Panc1 (cell line): ENCODE measurements at regions of chr12 and their contacts with region 1.

Region 1: GRCh38 chr12:29309320-29309902 is 71.6 kb downstream of the ERGIC2 start:
- DNase-seq: no peak
- ATAC-seq: no peak
- H3K4me3 ChIP-seq: no peak overlapping the region
- H3K27ac ChIP-seq: no peak overlapping the region
- H3K4me1 ChIP-seq: no peaks in the 10 kb centered on the region
- H3K27me3 ChIP-seq: no peaks in the 10 kb centered on the region
- CTCF ChIP-seq: peak; percentile 57

Region 2: DNA sequence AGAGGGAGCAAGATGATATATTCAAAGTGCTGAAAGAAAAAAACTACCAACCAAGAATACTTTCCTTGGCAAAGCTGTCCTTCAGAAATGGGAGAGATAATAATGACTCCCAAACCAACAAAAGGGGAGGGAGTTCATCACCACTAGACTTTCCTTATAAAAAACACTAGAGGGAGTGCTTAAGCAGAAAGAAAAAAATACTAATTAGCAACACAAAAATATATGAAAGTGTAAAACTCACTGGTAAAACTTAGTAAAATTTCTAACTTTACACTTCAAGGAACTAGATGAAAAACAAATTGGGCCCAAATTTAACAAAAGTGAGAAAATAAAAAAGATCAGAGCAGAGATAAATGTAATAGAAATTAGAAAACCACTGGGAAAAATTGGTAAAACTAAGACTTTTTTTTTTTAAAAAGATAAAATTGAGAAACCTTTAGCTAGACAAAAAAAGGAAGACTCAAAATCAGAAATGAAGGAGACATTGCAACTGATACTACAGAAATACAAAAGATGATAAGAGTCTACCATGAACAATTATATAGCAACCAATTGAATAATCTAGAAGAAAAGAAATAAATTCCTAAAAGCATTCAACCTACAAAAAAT is 220.7 kb before region 1 on chr12:
- CTCF ChIA-PET with region 1: no interaction called
- POLR2A ChIA-PET with region 1: no interaction called
- in situ Hi-C with region 1: no loop called
- intact Hi-C with region 1: no loop called
- DNase-seq: no peak
- ATAC-seq: no peak
- H3K4me3 ChIP-seq: no peak overlapping the region
- H3K27ac ChIP-seq: no peak overlapping the region
- H3K4me1 ChIP-seq: no peaks in the 10 kb centered on the region
- H3K27me3 ChIP-seq: no peaks in the 10 kb centered on the region
- CTCF ChIP-seq: peak; percentile 60; the same call in 1 of the 2 replicates

Region 3: GRCh38 chr12:29131539-29131938 is 177.9 kb before region 1 on chr12:
- CTCF ChIA-PET with region 1: no interaction called
- POLR2A ChIA-PET with region 1: no interaction called
- in situ Hi-C with region 1: no loop called
- intact Hi-C with region 1: no loop called
- DNase-seq: no peak
- ATAC-seq: no peak
- H3K4me3 ChIP-seq: no peak overlapping the region
- H3K27ac ChIP-seq: no peak overlapping the region
- H3K4me1 ChIP-seq: no peaks in the 10 kb centered on the region
- H3K27me3 ChIP-seq: no peaks in the 10 kb centered on the region
- CTCF ChIP-seq: no peak

Region 4: DNA sequence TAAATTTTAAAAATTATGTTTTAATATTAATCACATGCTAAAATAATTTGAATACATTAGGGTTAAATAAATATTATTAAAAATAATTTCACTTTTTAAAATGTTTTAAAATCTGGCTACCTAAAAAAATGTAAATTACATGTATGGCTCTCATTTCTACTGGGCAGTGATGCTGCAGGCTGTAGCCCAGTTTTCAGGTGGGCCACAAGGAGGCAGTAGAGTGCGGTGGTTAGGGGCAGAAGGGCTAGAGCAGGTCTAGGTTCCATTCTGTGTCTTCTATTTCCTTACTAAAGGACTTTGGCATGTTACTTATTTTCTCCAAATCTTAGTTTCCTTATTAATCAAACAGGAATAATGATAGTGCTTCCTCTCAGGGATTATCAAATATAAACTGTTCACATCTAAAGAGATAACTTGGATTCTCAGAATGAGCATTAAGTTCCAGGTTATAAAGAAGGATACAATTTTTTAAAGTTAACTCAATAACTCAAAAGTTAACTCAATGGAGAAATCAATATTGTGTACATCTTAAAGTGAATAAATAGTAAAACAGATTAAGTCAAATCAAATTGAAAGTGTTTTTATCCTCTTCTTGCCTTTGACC is 243.0 kb after region 1 on chr12:
- CTCF ChIA-PET with region 1: interaction called, 10 read pairs
- POLR2A ChIA-PET with region 1: no interaction called
- in situ Hi-C with region 1: no loop called
- intact Hi-C with region 1: no loop called
- DNase-seq: peak; percentile 33
- ATAC-seq: peak; percentile 84
- H3K4me3 ChIP-seq: no peak overlapping the region
- H3K27ac ChIP-seq: no peak overlapping the region
- H3K4me1 ChIP-seq: no peaks in the 10 kb centered on the region
- H3K27me3 ChIP-seq: no peaks in the 10 kb centered on the region; the same call in 1 of the 2 replicates
- CTCF ChIP-seq: peak; percentile 93